ENCODE measurements at regions of chr7 and their contacts with region 1.

Region 1: DNA sequence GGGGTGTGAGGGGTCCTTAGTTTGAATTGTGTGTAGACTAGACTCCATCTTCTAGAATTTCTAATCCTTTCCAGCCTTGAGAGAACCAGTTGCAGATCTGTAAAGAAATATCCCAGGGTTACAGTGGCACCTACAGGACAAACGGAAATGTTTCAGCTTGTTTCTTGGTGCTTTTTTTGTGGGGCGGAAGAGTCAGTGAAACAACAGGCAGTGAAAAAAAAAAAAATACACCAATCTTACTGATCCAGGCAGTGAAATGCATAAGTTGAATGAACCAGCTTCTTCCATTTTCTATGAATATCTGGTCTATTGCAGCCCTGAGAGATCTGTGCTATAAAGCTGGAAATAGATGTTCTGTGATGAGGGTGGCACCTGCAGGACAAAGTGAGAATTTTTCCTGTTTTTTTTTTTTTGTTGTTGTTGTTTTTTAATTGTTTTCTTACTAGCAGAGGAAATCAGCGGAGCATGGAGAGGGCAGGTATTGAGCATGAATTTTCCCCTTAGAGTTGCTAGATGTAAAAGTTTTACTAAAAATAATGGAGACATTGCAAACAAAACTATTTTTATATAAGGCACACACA is 81.9 kb upstream of the DYNC1I1 start:
- DNase-seq: no peak

Region 2: DNA sequence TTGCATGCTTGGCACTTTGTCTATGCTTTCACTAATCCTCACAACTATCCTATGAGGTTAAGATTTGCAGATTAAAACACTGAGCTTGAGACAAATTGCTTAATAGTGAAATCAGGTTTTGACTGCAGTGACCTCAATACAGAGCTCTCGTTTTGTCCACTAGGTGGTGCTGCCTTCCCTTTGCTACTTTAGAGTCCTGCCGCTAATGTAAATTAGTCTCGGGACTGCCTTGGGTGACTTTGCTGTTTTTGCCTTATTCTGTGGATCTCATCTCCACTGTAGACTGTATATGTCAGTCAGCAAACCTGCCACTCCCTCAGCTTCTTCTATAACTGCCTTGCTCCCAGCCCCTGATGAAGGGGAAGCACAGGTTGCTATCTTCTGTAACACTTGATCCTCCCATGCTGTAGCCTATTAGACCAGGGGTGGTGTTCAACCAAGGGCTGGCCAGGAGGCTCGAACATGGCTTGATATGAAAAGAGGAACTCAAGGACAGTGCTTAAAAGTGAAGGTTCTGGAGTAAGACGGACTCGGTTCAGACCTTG is 178.7 kb before region 1 on chr7:
- intact Hi-C with region 1: loop called (anchors 5 kb)
- DNase-seq: peak; percentile 83

Region 3: GRCh38 chr7:95527033-95527775 is 163.3 kb before region 1 on chr7:
- intact Hi-C with region 1: loop called (anchors 2 to 5 kb)
- DNase-seq: no peak

Region 4: GRCh38 chr7:95596198-95597063 is 94.0 kb before region 1 on chr7 and contains the start of gene PDK4:
- intact Hi-C with region 1: loop called in 1 of 2 experiments (anchors 10 kb)
- DNase-seq: peak; percentile 96
- total RNA-seq, gene PDK4: 66.4 to 433 TPM